ENCODE measurements at regions of chr19 and their contacts with region 1.

Region 1: DNA sequence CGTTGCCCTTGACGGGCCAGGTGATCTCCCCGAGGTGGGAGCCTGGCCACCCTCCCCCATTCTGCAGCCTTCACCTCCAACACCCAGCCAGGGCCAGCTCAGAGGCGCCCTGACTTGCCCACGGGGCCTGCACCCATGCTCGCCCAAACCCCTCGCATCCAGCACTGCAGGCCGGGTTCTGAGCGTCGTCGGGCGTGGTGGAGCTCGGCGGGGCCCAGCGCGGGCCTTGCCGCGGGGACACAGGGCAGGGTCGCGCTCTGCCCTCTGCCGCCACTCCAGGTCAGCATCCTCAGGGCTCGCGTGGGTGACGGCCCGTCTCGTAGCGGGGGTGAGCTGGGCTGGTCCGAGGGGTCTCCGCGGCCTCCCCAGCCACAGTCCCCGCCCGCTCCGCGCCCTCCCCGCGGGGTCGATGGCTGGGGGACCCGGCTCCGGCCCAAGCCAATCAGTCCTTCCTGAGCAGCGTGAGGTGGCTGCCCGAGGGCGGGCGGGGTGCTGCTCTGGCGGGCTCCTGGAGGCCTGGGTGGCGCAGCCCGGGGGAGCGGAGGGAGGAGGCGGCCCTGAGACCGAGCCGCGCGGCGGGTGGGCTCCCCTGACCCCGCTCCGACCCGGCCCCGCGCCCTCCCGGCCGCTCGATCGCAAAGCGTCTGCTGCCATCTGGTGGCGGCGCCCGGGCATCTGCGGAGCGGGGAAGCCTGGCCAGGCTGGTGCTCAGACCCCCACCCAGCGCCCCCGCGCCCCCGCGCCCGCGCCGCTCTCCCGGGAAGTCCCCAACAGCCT is 61.4 kb downstream of the CCNE1 start:
- DNase-seq: peak in 3 of 5 donors; percentile 49 to 80 (median 59)
- ATAC-seq: peak in 3 of 4 donors; percentile 54 to 84 (median 79)
- H3K4me3 ChIP-seq: peak overlapping the region; percentile 21 to 59 (median 51)
- H3K27ac ChIP-seq: no peak overlapping the region
- H3K4me1 ChIP-seq: peaks cover 0 to 29% (median 12%) of the 10 kb centered on the region in 12 donors
- H3K27me3 ChIP-seq: peaks cover 0 to 34% (median 19%) of the 10 kb centered on the region in 9 donors
- CTCF ChIP-seq: peak; percentile 68 to 95 (median 88)
- POLR2A ChIP-seq: no peak

Region 2: DNA sequence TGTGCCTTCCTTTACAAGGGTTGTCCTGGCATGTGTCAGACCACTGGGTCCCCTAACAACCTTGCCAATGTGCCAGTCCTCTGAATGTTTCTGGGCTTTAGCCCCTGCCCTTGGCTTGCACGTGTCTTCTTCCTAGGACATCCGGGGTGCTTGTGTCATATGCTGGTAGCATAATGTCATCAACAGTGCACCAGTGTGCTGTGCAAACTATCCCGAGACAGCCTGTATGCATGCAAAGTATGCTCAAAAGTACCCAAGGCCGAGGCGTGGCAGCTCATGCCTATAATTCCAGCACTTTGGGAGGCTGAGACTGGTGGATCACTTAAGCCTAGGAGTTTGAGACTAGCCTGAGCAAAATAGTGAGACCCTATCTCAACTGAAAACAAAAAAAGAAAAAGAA is 137.4 kb before region 1 on chr19:
- intact Hi-C with region 1: loop called (anchors 1 to 10 kb)
- DNase-seq: no peak
- ATAC-seq: no peak
- H3K4me3 ChIP-seq: no peak overlapping the region
- H3K27ac ChIP-seq: no peak overlapping the region
- H3K4me1 ChIP-seq: peaks cover 0 to under 1% (median 0%) of the 10 kb centered on the region in 12 donors
- H3K27me3 ChIP-seq: peaks cover 0 to 36% (median 0%) of the 10 kb centered on the region in 9 donors
- CTCF ChIP-seq: no peak
- POLR2A ChIP-seq: no peak

Region 3: DNA sequence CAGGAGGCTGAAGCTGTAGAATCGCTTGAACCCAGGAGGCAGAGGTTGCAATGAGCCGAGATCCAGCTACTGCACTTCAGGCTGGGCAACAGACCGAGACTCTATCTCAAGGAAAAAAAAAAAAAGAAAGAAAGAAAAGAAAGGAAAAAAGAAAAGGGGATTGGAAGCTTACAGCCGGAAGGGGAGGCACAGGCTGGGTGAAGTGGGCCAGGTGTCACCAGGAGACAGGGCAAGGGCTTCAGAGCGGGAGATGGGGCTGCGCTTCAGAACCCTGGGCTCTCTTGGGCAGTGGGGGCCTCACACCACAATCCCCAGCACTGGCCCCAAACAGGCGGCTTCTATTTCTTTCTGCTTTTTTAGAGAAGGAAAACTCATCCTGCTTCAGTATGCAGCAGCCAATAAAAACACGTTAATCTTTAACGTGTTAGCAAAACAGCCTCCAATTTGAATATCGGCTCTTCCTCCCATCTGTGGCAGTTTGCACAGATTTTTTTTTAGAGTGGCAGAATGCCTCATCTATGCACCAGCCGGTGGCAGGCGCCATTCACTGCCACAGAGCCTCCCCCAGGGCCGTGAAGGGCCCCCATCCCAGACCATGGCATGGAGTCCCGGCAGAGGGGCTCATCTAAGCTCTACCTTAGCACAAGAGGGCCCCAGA is 111.5 kb before region 1 on chr19:
- intact Hi-C with region 1: loop called in 6 of 10 experiments (anchors 1 to 5 kb)
- DNase-seq: no peak
- ATAC-seq: no peak
- H3K4me3 ChIP-seq: no peak overlapping the region
- H3K27ac ChIP-seq: no peak overlapping the region
- H3K4me1 ChIP-seq: peaks cover 0 to 7% (median 0%) of the 10 kb centered on the region in 12 donors
- H3K27me3 ChIP-seq: peaks cover 0 to 20% (median 0%) of the 10 kb centered on the region in 9 donors
- CTCF ChIP-seq: no peak
- POLR2A ChIP-seq: no peak

Region 4: DNA sequence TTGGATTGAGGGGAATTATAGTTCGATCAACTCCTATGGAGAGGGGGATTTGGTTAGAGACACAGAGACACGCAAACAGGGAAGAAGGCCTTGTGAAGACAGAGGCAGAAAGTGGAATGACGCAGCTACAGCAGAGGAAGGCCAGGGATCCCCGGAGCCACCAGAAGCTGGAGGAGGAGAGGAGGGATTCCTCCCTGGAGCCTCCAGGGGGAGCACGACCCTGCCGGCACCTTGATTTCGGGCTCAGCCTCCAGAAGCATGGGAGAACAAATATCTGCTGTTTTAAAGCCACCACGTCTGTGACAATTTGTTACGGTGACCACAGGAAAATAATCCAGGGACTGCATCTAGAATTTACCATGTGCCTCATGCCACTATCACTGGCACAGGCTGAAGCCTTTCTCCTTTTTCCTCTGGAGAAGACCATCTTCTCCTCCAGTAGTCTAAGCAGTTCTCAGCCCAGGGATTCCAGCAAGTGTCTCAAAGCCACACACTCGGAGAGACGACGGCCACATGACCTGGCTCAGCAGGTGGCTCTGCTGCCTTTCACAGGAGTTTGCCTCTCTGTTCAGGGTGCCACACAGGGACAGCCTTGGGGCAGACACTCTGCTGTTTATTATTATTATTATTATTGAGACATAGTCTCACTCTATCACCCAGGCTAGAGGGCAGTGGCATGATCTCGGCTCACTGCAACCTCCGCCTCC is 101.4 kb before region 1 on chr19:
- intact Hi-C with region 1: loop called in 5 of 10 experiments (anchors 1 to 5 kb)
- DNase-seq: peak in 4 of 5 donors; percentile 27 to 49 (median 42)
- ATAC-seq: peak in 3 of 4 donors; percentile 52 to 81 (median 74)
- H3K4me3 ChIP-seq: no peak overlapping the region
- H3K27ac ChIP-seq: no peak overlapping the region
- H3K4me1 ChIP-seq: no peaks in the 10 kb centered on the region
- H3K27me3 ChIP-seq: no peaks in the 10 kb centered on the region
- CTCF ChIP-seq: peak; percentile 54 to 82 (median 69)
- POLR2A ChIP-seq: no peak

Region 5: DNA sequence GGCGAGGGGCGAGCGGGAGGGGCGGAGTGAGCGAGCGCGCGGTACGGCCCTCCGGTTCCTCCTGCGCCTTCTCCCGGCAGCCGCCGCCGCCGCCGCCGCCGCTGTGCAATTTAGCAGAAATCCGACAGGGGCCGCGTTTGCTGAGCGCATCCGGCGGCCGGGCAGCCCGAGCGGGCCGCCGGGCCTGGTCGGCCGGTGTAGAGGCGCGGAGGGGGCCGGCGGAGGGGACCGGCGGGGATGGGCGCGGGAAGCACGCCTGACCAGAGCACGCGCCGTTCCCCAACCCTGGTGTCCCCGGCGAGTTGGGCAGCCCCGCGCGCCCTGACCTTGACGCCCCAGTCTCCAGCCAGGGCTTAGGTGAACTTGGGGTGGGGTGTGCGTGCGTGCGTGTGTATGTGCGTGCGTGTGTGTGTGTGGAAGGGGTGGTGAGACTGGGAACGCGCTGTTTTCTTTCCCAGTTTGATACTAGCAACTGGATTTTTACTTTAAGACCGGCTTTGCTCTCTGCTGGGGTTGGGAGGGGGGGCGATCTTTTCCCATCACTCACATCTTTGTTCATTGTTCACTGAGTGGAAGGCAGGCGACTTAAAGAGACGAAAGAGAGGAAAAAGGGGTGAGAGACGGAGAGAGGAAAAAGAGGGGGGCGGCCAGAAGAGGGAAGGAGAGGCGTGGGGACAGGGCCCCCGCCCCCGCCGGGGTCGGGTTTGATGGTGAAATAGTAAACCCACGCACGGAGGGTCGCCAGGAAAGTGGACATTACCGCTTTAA is 354.6 kb after region 1 on chr19:
- intact Hi-C with region 1: no loop called
- DNase-seq: peak; percentile 56 to 85 (median 68)
- ATAC-seq: peak; percentile 64 to 86 (median 78)
- H3K4me3 ChIP-seq: peak overlapping the region; percentile 41 to 69 (median 56)
- H3K27ac ChIP-seq: peak overlapping the region in 7 of 12 donors; percentile 15 to 82 (median 39)
- H3K4me1 ChIP-seq: peaks cover 0 to 51% (median 15%) of the 10 kb centered on the region in 12 donors
- H3K27me3 ChIP-seq: peaks cover 4 to 81% (median 49%) of the 10 kb centered on the region in 9 donors
- CTCF ChIP-seq: peak; percentile 27 to 77 (median 64)
- POLR2A ChIP-seq: no peak

Measured in heart left ventricle (tissue), 16 donors.